ENCODE measurements at regions of chr1 and their contacts with region 1.

Region 1: GRCh38 chr1:38500352-38500751 is 359.2 kb downstream of the RRAGC start:
- DNase-seq: no peak
- ATAC-seq: no peak
- H3K4me3 ChIP-seq: no peak overlapping the region
- H3K4me3 Mint-ChIP-seq: no peak overlapping the region
- H3K27ac ChIP-seq: no peak overlapping the region
- H3K27ac Mint-ChIP-seq: no peak overlapping the region
- H3K4me1 ChIP-seq: peaks cover 8 to 12% of the 10 kb centered on the region in 2 donors
- H3K4me1 Mint-ChIP-seq: peaks cover 22% of the 10 kb centered on the region
- H3K27me3 ChIP-seq: peaks cover 0 to 11% (median 5%) of the 10 kb centered on the region in 4 experiments
- H3K27me3 Mint-ChIP-seq: peaks cover 13% of the 10 kb centered on the region
- CTCF ChIP-seq: peak; percentile 54

Region 2: DNA sequence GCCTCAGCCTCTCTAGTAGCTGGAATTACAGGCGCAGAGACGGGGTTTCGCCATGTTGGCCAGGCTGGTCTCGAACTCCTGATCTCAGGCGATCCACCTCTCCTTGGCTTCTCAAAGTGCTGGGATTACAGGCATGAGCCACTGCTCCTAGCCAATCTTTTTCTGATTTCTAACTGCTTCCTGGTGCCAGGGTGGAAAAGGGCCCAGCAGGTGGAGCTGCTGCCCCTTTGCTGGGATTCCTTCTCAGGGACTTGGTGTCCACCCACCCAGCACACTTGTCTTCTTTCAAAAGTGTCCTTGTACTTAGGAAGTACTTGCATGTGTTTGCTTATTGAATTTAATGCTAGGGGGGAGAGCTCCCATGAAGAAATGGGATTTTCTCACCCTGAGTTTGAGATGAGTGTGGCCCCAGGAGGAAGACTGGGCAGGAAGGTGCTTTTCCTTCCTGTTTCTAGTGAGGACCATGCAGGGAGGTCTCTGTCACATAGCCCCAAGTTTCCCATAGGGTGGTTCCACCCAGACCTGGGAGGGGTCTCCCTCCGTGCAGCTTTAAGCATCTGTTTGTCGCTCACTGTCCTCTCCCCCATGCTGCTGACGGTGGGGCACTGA is 473.7 kb before region 1 on chr1:
- CTCF ChIA-PET with region 1: interaction called, 13 read pairs
- POLR2A ChIA-PET with region 1: no interaction called
- intact Hi-C with region 1: loop called (anchors 5 kb)
- DNase-seq: peak; percentile 38
- ATAC-seq: no peak
- H3K4me3 ChIP-seq: no peak overlapping the region
- H3K4me3 Mint-ChIP-seq: no peak overlapping the region
- H3K27ac ChIP-seq: no peak overlapping the region
- H3K27ac Mint-ChIP-seq: no peak overlapping the region
- H3K4me1 ChIP-seq: peaks cover 5 to 13% of the 10 kb centered on the region in 2 donors
- H3K4me1 Mint-ChIP-seq: peaks cover 19% of the 10 kb centered on the region
- H3K27me3 ChIP-seq: no peaks in the 10 kb centered on the region
- H3K27me3 Mint-ChIP-seq: peaks cover 4% of the 10 kb centered on the region
- CTCF ChIP-seq: peak; percentile 31

Region 3: DNA sequence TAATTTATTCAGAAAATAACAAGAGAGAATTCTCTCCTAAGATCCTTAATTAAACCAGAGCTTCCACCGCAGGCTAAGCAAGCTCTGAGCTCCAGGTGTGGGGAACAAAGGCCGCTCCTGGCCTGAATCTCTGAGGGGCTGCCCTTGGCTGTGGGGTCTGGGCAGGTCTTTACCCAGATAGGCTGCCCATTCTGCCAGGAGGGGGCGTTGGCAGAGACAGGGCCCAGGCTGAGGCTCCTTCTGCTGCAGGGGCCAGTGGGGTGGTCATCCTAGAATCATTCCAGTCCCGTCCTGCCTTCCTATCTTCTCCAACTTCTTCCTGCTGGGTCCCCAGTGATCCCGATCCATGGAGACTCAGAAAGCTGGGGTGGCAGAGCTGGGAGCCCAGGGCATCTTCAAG is 370.9 kb before region 1 on chr1:
- CTCF ChIA-PET with region 1: no interaction called
- POLR2A ChIA-PET with region 1: no interaction called
- intact Hi-C with region 1: no loop called
- DNase-seq: no peak
- ATAC-seq: no peak
- H3K4me3 ChIP-seq: no peak overlapping the region
- H3K4me3 Mint-ChIP-seq: no peak overlapping the region
- H3K27ac ChIP-seq: no peak overlapping the region
- H3K27ac Mint-ChIP-seq: no peak overlapping the region
- H3K4me1 ChIP-seq: peaks cover 0 to 3% of the 10 kb centered on the region in 2 donors
- H3K4me1 Mint-ChIP-seq: peaks cover 3% of the 10 kb centered on the region
- H3K27me3 ChIP-seq: peaks cover 0 to 20% (median 2%) of the 10 kb centered on the region in 4 experiments
- H3K27me3 Mint-ChIP-seq: peaks cover 24% of the 10 kb centered on the region
- CTCF ChIP-seq: no peak

Region 4: DNA sequence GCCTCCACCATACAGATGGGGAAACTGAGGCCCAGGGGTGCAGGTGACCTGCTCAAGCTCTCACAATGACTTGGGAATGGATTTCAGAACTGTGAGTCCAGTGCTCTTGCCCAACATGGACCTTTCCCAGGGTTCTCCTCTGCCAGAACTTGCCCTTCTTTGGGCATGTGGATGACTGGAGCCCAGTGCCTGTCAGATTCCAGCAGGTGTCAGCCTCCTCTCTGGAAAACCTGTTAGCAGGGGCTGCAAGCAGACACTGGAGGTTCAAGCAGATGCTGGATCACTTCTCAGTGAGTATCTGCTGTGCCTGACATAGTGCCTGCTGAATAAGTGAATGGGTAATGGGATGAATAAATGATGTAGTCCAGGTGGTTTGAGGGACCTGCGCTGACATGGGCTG is 139.5 kb before region 1 on chr1:
- CTCF ChIA-PET with region 1: no interaction called
- POLR2A ChIA-PET with region 1: no interaction called
- intact Hi-C with region 1: loop called (anchors 10 kb)
- DNase-seq: peak; percentile 17
- ATAC-seq: no peak
- H3K4me3 ChIP-seq: no peak overlapping the region
- H3K4me3 Mint-ChIP-seq: no peak overlapping the region
- H3K27ac ChIP-seq: no peak overlapping the region
- H3K27ac Mint-ChIP-seq: no peak overlapping the region
- H3K4me1 ChIP-seq: no peaks in the 10 kb centered on the region
- H3K4me1 Mint-ChIP-seq: no peaks in the 10 kb centered on the region
- H3K27me3 ChIP-seq: no peaks in the 10 kb centered on the region
- H3K27me3 Mint-ChIP-seq: no peaks in the 10 kb centered on the region
- CTCF ChIP-seq: no peak

Region 5: DNA sequence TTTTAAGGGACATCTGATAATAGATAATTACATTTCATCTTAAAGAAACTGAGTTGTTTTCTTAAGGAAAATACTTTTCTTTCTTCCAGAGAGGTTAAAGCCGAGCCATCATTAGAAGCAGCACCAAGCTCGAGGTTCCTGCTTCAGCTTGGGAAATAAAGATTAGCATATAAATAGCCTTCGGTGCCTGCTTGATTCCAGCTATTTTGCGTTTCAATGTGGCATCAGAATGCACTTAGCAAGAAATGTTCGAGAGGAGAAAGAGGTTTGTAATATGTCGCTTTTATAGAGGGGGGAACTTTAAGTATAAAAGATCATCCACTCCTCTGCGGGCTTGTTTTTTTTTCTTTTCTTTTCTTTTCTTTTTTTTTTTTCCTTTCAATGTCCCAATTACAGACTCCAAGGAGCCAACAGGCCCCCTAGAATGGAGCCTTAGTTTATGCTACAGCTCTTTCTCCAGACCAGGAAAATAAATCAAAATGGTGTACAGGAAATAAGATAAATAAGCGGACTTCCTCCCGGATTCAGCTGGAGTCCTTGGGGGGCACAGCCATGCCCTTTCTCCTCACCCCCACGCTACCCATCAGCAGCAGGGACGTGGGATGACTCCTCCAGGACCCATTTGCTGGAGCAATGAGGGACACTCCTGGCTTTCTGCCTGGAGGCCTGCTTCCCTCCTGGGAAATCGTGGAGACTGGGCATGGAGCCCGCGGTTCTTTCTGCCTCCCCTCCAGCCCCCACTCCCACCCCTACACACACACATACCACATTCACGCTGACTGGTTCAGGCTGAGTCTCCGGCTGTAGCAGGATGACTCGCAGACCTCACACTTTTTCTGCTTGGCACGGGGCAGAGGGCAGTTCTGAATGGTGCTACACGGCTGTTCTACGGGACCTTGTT is 227.6 kb after region 1 on chr1:
- CTCF ChIA-PET with region 1: no interaction called
- POLR2A ChIA-PET with region 1: no interaction called
- intact Hi-C with region 1: no loop called
- DNase-seq: no peak
- ATAC-seq: no peak
- H3K4me3 ChIP-seq: no peak overlapping the region
- H3K4me3 Mint-ChIP-seq: no peak overlapping the region
- H3K27ac ChIP-seq: no peak overlapping the region
- H3K27ac Mint-ChIP-seq: no peak overlapping the region
- H3K4me1 ChIP-seq: no peaks in the 10 kb centered on the region
- H3K4me1 Mint-ChIP-seq: no peaks in the 10 kb centered on the region
- H3K27me3 ChIP-seq: peaks cover 0 to 32% (median 19%) of the 10 kb centered on the region in 4 experiments
- H3K27me3 Mint-ChIP-seq: peaks cover 82% of the 10 kb centered on the region
- CTCF ChIP-seq: no peak

Measured in B cell (primary cell).